ENCODE measurements at regions of chr3 and their contacts with region 1.

Region 1: GRCh38 chr3:157738441-157738840 is 235.2 kb upstream of the VEPH1 start:
- DNase-seq: no peak
- H3K4me3 Mint-ChIP-seq: no peak overlapping the region
- H3K27ac Mint-ChIP-seq: no peak overlapping the region
- H3K4me1 Mint-ChIP-seq: no peaks in the 10 kb centered on the region
- H3K27me3 Mint-ChIP-seq: no peaks in the 10 kb centered on the region
- CTCF ChIP-seq: no peak

Region 2: GRCh38 chr3:158127250-158128219 is 389.1 kb after region 1 on chr3:
- CTCF ChIA-PET with region 1: interaction called, 11 read pairs
- intact Hi-C with region 1: no loop called
- DNase-seq: no peak
- H3K4me3 Mint-ChIP-seq: no peak overlapping the region
- H3K27ac Mint-ChIP-seq: peak overlapping the region; percentile 61
- H3K4me1 Mint-ChIP-seq: peaks cover 15% of the 10 kb centered on the region
- H3K27me3 Mint-ChIP-seq: no peaks in the 10 kb centered on the region
- CTCF ChIP-seq: no peak

Measured in Calu3 (cell line).